Heart left ventricle (tissue), 16 donors: ENCODE measurements at regions of chr13 and their contacts with region 1.

Region 1: DNA sequence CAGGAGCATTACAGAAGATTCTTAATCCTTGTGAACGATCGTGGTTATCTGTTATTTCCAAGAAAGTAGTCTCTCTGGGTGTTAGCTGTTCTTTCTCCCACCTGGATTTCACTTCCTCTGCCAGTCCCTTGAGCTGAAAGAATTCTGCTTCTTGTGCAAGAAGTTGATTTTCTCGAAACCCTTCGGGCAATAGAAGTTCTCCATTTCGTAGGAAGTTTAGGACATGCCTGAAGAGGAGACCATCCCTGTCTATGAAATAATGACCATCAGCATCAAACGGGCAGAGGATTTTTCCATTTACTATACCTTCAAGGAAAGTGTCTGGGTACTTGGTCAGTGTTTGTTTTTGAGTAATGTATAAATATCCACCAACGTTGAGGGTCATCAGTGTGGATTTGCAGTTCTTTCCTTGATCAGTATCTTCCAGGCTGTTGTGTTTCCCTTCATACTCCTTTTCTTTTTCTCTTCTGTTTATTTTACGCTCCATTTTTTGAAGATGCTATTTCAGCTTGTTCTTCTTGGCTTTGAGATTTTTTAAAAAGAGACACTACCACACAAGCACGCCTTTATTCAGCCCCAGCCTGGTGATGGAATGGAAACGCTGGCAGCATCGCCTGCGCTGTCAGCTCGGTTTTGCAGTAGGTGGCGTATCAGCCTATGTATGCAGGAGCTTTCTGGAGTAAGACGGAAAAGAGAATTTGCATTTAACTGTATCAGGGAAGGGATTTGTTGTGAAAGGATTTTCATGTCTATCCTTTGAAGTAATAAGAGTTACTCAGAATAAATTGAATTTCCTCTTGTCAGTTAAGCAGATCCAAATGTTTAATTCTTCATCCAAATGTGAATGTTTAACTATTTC is 6.5 kb downstream of the KCTD4 start:
- DNase-seq: peak in 3 of 5 donors; percentile 38 to 45 (median 40)
- ATAC-seq: peak in 3 of 4 donors; percentile 64 to 89 (median 73)
- H3K4me3 ChIP-seq: peak overlapping the region in 3 of 12 donors; percentile 16 to 25 (median 20)
- H3K27ac ChIP-seq: no peak overlapping the region
- H3K4me1 ChIP-seq: peaks cover 0 to 41% (median 18%) of the 10 kb centered on the region in 12 donors
- H3K27me3 ChIP-seq: no peaks in the 10 kb centered on the region
- CTCF ChIP-seq: peak in 10 of 12 donors; percentile 8 to 68 (median 42)
- POLR2A ChIP-seq: no peak

Region 2: DNA sequence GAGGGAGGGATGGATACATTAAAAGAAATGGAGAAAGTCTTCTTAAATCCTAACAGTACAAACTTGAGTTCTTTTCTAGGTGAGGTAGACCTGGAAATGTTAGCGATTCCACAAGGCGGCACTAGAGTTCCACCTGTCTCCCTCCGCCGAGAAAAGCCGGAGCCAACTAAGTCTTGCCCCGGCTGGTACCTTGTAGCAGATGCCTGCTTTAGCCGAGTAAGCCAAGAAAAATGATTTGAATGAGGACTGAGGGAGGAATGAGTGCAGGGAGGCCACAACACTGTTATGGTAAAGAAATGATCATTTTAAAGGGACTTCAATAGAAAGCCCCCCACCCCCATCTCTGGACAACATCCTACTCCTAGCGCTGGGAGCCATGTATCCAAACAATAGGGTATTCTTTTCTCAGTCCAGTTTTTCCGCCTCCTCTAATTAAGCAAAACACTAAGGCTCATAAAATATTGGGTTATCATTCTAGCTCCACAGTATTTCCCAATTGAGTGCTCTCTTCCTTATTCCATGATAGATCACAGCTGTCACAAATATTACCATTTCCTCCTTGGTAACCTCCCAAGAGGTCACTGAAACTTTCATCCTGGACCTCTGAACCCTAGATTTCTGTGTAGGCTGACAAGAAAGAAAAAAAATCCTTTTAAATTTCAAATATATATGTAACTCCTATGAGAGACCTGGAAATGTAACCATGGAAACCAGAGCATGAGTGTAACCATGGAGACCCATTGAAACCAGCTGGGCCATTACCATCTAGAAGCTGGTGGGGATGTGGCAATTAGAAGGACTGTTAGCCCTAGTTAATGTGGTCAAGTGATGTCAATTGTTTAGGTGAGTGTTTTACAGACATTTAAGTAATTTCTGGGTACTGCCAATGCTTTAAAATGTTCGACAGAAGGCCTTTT is 146.7 kb before region 1 on chr13:
- intact Hi-C with region 1: loop called in 1 of 10 experiments (anchors 10 kb)
- DNase-seq: peak; percentile 63 to 73 (median 67)
- ATAC-seq: peak; percentile 73 to 87 (median 80)
- H3K4me3 ChIP-seq: peak overlapping the region in 11 of 12 donors; percentile 22 to 59 (median 50)
- H3K27ac ChIP-seq: peak overlapping the region in 5 of 12 donors; percentile 38 to 66 (median 49)
- H3K4me1 ChIP-seq: peaks cover 0 to 16% (median 3%) of the 10 kb centered on the region in 12 donors
- H3K27me3 ChIP-seq: no peaks in the 10 kb centered on the region
- CTCF ChIP-seq: peak; percentile 75 to 91 (median 85)
- POLR2A ChIP-seq: no peak